Dendritic cell treated with granulocyte-macrophage colony-stimulating factor and Interleukin-4, amounts not matched to agents 40 ng/mL and 50 ng/mL, for 4 days (primary cell): ENCODE measurements at regions of chr2 and their contacts with region 1.

Region 1: DNA sequence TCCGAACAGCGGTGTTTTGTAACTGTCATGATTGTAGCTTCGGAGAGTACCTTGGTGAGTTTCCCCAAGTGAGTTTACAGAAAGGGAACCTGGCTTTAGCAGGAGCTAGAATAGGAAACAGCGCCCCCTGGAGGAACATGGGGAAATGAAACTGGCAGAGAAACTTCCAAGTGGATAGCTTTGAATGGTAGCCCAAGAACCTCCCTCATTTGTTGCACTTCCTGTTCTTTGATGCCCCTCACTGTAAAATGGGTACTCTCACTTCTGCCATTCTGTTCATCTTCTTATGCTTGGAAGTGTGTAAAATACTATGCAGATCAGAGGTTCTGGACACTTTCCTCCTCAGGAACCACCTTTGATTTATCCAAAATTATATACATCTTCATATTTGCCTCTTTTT is 36.2 kb downstream of the CHST10 start:
- H3K4me3 Mint-ChIP-seq: no peak overlapping the region
- H3K27ac Mint-ChIP-seq: no peak overlapping the region
- H3K4me1 Mint-ChIP-seq: peaks cover 4% of the 10 kb centered on the region
- H3K27me3 Mint-ChIP-seq: no peaks in the 10 kb centered on the region

Region 2: DNA sequence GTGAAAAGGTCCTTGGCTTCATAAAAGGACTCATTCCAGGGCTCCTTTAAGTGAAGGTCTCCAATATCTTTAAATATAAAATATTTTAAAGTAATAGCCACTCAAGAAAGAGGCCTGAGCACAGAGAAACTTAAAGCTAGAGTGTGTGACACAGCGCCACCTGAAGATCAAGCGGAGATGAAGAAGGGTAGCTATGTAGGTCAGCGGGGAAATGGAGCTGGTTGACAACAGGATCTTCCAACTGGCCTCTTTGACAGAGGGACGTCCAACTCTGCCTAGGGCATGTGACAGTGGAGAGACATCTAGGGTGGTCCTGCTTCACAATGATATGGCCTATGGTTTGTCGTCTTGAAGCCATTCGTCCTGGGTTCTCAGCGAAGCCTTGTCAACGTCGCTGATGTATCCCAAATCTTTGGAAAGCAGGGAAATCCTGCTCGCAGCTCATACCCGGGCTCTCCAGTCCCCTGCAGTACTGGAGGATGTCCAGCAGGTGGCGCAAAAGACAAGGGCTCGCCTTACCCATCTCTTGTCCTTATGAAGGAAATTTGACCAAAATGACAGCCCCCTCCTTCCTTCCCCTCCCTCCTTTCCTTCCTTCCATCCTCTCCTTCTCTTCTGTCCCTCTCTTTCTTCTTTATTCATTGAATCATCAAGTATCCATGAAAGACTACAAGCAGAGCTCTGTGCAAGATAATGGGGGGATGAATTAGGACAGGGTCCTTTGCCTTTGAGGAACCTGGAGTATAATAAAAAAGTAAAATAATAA is 118.5 kb before region 1 on chr2:
- intact Hi-C with region 1: loop called (anchors 5 kb)
- H3K4me3 Mint-ChIP-seq: no peak overlapping the region
- H3K27ac Mint-ChIP-seq: no peak overlapping the region
- H3K4me1 Mint-ChIP-seq: peaks cover 15% of the 10 kb centered on the region
- H3K27me3 Mint-ChIP-seq: no peaks in the 10 kb centered on the region

Region 3: GRCh38 chr2:100407108-100407507 is 25.9 kb after region 1 on chr2:
- intact Hi-C with region 1: no loop called
- H3K4me3 Mint-ChIP-seq: no peak overlapping the region
- H3K27ac Mint-ChIP-seq: no peak overlapping the region
- H3K4me1 Mint-ChIP-seq: no peaks in the 10 kb centered on the region
- H3K27me3 Mint-ChIP-seq: no peaks in the 10 kb centered on the region

Region 4: DNA sequence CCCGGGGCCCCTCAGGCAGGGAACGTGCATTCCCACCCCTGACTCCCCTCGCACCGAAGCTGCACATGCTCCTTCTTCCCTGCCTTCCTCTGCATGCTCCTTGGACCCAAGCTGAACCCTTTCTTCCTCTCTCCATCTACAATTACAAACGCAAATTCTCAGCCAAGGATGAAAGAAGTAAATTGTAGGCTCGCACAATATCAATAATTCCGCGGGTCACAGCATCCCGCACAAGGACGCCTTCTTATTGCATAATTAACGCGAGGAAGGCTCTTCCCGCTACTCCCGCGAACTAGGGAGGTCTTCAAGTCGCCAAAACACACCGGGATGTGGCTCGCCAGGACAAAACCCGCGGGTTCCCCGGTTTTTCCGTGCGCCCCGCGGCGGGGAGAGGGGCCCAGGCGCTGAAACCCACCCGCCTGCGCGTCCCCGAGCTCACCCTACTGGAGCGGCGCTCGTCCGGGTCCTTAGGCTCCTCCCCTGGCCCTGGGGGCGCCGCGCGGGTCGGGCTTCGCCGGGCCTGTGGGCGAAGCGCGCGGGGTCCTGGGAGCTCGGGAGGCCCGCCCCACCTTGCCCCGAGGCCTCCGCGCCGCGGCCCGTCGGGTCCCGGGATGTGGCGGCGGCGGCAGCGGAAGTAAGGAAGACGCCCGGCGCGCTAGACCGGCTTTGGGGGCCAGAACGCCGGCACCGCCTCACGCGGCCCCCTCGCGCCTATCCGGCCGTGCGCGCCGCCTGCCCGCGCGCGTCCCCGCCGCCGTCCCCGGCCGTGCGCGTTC is 35.9 kb after region 1 on chr2 and contains the start of gene CHST10:
- intact Hi-C with region 1: no loop called
- H3K4me3 Mint-ChIP-seq: peak within 1 kb of the TSS; percentile 81
- H3K27ac Mint-ChIP-seq: peak within 1 kb of the TSS; percentile 67
- H3K4me1 Mint-ChIP-seq: peaks cover 43% of the 10 kb centered on the region
- H3K27me3 Mint-ChIP-seq: peaks cover 13% of the 10 kb centered on the region

Region 5: DNA sequence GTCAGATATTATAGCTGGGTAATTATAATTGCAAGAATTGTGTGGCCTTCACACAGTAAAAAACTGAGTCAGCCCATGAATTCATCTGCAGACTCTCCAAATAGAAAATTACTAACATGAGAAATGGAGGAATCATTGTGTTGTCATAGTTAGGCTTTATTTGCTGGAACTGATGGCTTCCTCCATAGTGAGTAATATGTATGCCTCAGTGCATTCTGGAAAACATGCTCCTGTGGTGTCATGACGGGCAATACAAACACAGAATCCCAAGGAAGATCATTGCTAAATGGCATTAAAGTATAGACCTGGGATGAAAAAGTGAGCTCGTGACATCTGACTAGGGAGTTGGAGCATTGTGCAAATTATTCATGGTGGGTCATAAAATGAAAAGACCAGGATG is 65.5 kb after region 1 on chr2:
- intact Hi-C with region 1: no loop called
- H3K4me3 Mint-ChIP-seq: no peak overlapping the region
- H3K27ac Mint-ChIP-seq: no peak overlapping the region
- H3K4me1 Mint-ChIP-seq: no peaks in the 10 kb centered on the region
- H3K27me3 Mint-ChIP-seq: peaks cover 2% of the 10 kb centered on the region